ENCODE measurements at regions of chr2 and their contacts with region 1.

Region 1: DNA sequence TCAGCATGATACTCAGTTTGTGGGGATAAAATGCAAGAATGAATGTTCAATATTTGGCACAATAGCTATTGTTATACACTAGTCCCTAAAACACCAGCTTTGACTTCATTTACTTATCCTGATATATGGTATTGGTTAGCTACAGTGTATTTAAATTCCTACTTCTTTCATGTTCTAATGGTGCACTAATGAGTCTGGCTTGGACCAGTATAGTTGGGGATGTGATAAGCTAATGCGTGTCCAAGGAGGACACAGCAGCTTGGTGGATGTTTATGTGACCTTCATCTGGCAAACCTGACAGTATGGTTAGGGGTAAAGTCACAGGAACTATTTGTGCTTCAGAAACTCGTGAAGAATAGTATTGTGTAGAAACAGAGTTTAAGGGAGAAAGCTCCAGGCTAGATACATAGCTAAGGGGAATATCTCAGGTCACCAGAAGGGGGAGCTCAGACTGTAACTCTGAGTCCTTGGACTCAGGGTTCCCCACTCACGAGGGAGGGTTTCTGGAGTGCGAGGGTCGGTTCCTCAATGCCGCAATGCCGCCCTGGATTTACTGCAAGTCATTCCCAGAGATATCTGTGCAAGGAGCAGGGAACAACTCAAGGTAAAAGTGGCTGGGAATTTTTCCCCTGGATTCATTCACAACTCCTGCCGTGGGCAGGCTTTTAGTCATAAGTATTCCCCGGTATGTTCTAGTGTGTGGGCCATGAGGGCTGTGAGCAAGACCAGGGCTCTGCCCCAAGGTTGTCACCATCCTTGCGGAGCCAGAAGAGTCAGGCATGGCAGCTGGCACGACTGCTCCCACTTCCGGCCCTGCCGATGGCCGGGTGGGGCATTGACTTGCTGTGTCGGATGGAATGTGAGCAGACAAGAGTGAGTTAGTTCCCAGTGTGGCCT is 14.5 kb downstream of the IL1R2 start:
- DNase-seq: no peak
- H3K4me3 ChIP-seq: no peak overlapping the region
- CTCF ChIP-seq: peak; percentile 64

Region 2: DNA sequence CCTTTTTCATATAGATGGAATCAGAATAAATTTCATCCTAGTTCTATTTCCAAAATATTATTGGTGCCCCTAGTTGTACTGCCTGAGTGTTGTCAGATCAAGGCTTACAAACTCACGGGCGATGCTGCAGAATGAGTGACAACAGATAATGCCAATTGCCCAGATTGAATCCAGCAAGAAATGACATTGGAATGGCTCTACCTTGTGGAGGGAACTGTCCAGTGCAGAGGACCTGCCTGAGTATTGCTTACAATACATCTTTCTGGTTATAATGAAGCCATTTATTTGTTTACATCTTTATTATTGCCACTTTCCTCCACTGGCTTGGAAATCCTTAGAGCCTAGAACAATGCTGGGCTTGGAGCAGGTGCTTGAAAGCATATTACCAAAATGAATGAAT is 22.3 kb before region 1 on chr2:
- CTCF ChIA-PET with region 1: interaction called, 10 read pairs
- POLR2A ChIA-PET with region 1: no interaction called
- DNase-seq: no peak
- H3K4me3 ChIP-seq: no peak overlapping the region
- CTCF ChIP-seq: peak; percentile 8

Region 3: GRCh38 chr2:101993772-101994171 is 12.5 kb before region 1 on chr2:
- CTCF ChIA-PET with region 1: interaction called, 41 read pairs
- POLR2A ChIA-PET with region 1: no interaction called
- DNase-seq: no peak
- H3K4me3 ChIP-seq: no peak overlapping the region
- CTCF ChIP-seq: no peak

Region 4: DNA sequence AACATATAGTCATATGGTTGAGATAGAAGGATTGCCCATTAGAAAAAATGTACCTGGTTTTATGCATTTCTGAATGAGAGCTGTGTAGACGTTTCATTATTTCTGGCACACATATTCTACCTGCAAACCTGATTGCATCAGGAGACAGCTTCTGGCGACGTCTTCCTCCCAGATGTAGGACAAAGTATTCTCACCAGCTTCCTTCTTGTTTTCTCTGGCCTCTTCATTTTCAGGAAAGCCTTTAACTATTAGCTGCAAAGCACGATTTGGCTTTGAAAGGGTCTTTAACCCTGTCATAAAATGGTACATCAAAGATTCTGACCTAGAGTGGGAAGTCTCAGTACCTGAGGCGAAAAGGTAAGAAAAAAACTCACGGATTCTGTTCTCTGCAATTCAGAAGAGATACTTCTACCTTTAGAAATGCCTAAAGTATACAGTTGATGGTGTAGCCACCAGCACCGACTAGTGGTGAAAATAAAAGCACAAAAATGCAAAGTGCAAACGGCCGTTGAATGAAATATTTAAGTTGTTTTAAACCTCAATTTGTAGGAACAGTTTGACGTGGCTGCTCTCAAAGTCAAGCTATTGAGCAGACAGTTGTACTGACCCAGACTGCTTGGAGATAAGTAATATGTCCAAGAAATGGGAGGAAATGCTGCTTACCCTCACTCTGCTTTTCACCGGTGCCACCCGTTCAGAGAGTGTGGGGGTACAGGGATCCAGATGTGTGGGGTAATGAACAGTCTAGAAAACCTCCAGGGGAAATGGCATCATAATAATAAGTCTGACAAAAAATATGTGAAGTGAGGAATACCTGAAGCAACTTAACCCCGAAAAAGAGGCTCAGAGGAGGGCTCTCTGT is 437.0 kb after region 1 on chr2:
- CTCF ChIA-PET with region 1: interaction called, 18 read pairs
- POLR2A ChIA-PET with region 1: no interaction called
- DNase-seq: no peak
- H3K4me3 ChIP-seq: no peak overlapping the region
- CTCF ChIP-seq: peak; percentile 41

Region 5: GRCh38 chr2:102449370-102449974 is 443.2 kb after region 1 on chr2:
- CTCF ChIA-PET with region 1: interaction called, 18 read pairs
- POLR2A ChIA-PET with region 1: no interaction called
- DNase-seq: no peak
- H3K4me3 ChIP-seq: no peak overlapping the region
- CTCF ChIP-seq: peak; percentile 52

Measured in AG04449 (cell line).